CD4-positive, alpha-beta T cell (primary cell): ENCODE measurements at regions of chr18 and their contacts with region 1.

Region 1: GRCh38 chr18:70671889-70672565 is 383.2 kb downstream of the SOCS6 start:
- DNase-seq: peak in 13 of 14 experiments; percentile 28 to 61 (median 43)
- ATAC-seq: peak; percentile 57
- H3K4me3 ChIP-seq: no peak overlapping the region
- H3K4me3 Mint-ChIP-seq: peak overlapping the region; percentile 61
- H3K27ac ChIP-seq: peak overlapping the region; percentile 59 to 84
- H3K27ac Mint-ChIP-seq: peak overlapping the region; percentile 91
- H3K4me1 ChIP-seq: peaks cover 44% of the 10 kb centered on the region
- H3K4me1 Mint-ChIP-seq: peaks cover 62% of the 10 kb centered on the region
- H3K27me3 ChIP-seq: no peaks in the 10 kb centered on the region
- H3K27me3 Mint-ChIP-seq: no peaks in the 10 kb centered on the region
- CTCF ChIP-seq: no peak

Region 2: GRCh38 chr18:70598406-70598805 is 73.6 kb before region 1 on chr18:
- CTCF ChIA-PET with region 1: no interaction called
- POLR2A ChIA-PET with region 1: interaction called, 5 read pairs
- intact Hi-C with region 1: loop called (anchors 2 to 5 kb)
- DNase-seq: no peak
- ATAC-seq: no peak
- H3K4me3 ChIP-seq: no peak overlapping the region
- H3K4me3 Mint-ChIP-seq: no peak overlapping the region
- H3K27ac ChIP-seq: no peak overlapping the region
- H3K27ac Mint-ChIP-seq: peak overlapping the region; percentile 85
- H3K4me1 ChIP-seq: peaks cover 8% of the 10 kb centered on the region
- H3K4me1 Mint-ChIP-seq: peaks cover 16% of the 10 kb centered on the region
- H3K27me3 ChIP-seq: no peaks in the 10 kb centered on the region
- H3K27me3 Mint-ChIP-seq: no peaks in the 10 kb centered on the region
- CTCF ChIP-seq: no peak

Region 3: DNA sequence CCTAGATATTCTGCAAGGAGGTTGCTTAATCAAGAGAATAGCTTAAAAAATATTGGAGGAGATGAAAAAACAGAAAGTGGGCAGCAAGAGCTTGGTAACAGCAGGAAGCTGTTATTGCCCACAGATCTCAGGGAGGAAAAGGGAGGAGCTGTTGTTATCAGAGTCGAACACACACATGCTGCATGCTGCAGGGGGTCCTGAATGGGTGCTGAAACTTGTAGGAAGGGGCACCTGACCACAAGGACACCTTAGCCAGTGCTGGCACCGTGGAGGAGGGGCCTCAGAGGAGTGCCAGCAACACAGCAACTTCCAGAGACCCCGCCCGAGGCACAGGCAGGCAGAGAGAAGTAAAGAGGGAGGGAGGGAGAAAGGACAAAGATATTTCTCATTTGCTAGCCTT is 50.3 kb before region 1 on chr18:
- CTCF ChIA-PET with region 1: interaction called, 3 read pairs
- POLR2A ChIA-PET with region 1: interaction called, 28 read pairs
- intact Hi-C with region 1: no loop called
- DNase-seq: peak in 12 of 14 experiments; percentile 9 to 60 (median 32)
- ATAC-seq: peak; percentile 86
- H3K4me3 ChIP-seq: peak overlapping the region; percentile 31
- H3K4me3 Mint-ChIP-seq: peak overlapping the region; percentile 85
- H3K27ac ChIP-seq: peak overlapping the region; percentile 47 to 66
- H3K27ac Mint-ChIP-seq: peak overlapping the region; percentile 95
- H3K4me1 ChIP-seq: peaks cover 32% of the 10 kb centered on the region
- H3K4me1 Mint-ChIP-seq: peaks cover 71% of the 10 kb centered on the region
- H3K27me3 ChIP-seq: no peaks in the 10 kb centered on the region
- H3K27me3 Mint-ChIP-seq: no peaks in the 10 kb centered on the region
- CTCF ChIP-seq: no peak

Region 4: GRCh38 chr18:70636991-70637390 is 35.0 kb before region 1 on chr18:
- CTCF ChIA-PET with region 1: no interaction called
- POLR2A ChIA-PET with region 1: interaction called, 3 read pairs
- intact Hi-C with region 1: loop called in 1 of 2 experiments (anchors 5 kb)
- DNase-seq: no peak
- ATAC-seq: no peak
- H3K4me3 ChIP-seq: no peak overlapping the region
- H3K4me3 Mint-ChIP-seq: no peak overlapping the region
- H3K27ac ChIP-seq: no peak overlapping the region
- H3K27ac Mint-ChIP-seq: no peak overlapping the region
- H3K4me1 ChIP-seq: peaks cover 6% of the 10 kb centered on the region
- H3K4me1 Mint-ChIP-seq: peaks cover 32% of the 10 kb centered on the region
- H3K27me3 ChIP-seq: no peaks in the 10 kb centered on the region
- H3K27me3 Mint-ChIP-seq: no peaks in the 10 kb centered on the region
- CTCF ChIP-seq: no peak

Region 5: DNA sequence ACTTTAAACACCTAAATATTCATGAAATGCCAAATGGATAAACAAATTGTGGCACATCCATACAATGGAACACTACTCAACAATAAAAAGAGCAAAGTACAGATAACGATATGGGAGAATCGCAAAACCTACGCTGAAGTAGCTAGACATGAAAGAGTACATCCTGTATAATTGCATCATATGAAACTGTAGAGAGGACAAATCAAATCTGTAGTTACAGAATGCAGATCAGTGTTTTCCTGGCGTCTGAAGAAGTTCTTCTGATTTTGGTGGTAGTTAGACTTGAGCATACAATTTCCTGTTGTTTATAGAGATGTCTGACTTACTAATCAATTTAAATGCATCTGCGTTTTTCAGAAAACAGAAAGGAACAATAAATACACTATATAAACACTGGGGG is 11.2 kb after region 1 on chr18:
- CTCF ChIA-PET with region 1: interaction called, 6 read pairs
- POLR2A ChIA-PET with region 1: interaction called, 20 read pairs
- intact Hi-C with region 1: loop called in 1 of 2 experiments (anchors 1 kb)
- DNase-seq: peak in 3 of 14 experiments; percentile 54 to 73 (median 71)
- ATAC-seq: peak; percentile 96
- H3K4me3 ChIP-seq: no peak overlapping the region
- H3K4me3 Mint-ChIP-seq: peak overlapping the region; percentile 8
- H3K27ac ChIP-seq: peak overlapping the region in 1 of 2 donors; percentile 32
- H3K27ac Mint-ChIP-seq: peak overlapping the region; percentile 91
- H3K4me1 ChIP-seq: no peaks in the 10 kb centered on the region
- H3K4me1 Mint-ChIP-seq: peaks cover 34% of the 10 kb centered on the region
- H3K27me3 ChIP-seq: no peaks in the 10 kb centered on the region
- H3K27me3 Mint-ChIP-seq: no peaks in the 10 kb centered on the region
- CTCF ChIP-seq: no peak